BJ (cell line): ENCODE measurements at regions of chr11 and their contacts with region 1.

Region 1: DNA sequence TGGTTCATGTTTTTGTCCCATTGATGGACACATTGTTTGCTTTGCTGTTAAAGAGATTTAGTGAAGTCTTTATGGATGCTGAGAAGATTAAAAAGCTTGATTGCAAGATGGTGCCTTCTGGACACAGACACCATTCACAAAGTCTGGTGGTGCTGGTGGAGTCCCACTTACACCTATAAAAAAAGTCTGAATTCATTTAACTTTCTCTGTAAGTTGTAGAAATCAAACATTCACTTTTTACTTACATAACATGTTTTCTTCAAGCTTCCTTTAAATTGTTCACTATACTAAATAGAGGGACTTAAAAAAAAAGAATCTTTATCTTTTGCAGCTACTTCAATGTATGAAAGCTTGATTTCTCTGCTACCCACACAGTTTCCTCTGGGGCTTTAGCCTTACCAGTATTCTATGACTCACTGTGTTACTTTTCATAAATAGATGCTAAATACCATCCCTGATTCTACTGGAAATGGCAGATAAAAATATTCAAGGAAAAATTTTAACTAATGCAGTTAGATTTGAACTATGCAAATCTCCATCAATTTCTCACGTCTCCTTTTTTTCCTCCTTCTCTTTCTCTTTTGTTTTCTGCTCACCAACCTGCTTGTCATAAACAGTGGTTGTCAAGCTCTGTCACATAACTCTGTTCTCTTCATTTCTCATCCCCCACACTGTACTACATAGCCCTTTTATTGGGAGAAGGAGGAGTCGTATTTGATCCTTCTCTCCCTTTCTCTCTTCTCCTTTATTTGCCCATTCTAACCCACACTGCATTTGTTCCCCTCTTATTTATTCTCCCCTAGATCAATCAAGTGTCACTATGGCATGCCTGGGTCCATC is 89.7 kb downstream of the FAM76B start:
- DNase-seq: no peak
- H3K4me3 ChIP-seq: no peak overlapping the region
- H3K27me3 ChIP-seq: peaks cover 2% of the 10 kb centered on the region
- CTCF ChIP-seq: no peak

Region 2: DNA sequence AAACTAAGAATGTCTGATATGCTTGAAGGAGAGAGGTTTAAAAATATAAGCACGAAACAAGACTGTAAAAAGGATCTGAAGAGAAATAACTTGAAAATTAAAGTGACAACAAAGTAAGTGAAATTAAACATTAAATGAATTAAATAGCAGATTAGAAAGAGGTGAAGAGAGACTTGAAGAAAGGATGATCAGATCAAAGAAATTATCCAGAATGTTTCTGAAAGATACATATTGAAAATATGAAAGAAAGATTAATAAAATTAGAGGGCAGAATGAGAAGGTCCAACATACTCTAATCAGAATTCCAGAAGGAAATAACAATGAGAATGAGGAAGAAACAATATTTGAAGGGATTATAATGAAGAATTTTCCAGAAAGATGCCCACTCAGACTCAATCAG is 61.4 kb before region 1 on chr11:
- CTCF ChIA-PET with region 1: no interaction called
- POLR2A ChIA-PET with region 1: interaction called, 19 read pairs
- DNase-seq: no peak
- H3K4me3 ChIP-seq: no peak overlapping the region
- H3K27me3 ChIP-seq: no peaks in the 10 kb centered on the region
- CTCF ChIP-seq: no peak

Region 3: GRCh38 chr11:95821640-95822039 is 121.8 kb after region 1 on chr11:
- CTCF ChIA-PET with region 1: no interaction called
- POLR2A ChIA-PET with region 1: no interaction called
- DNase-seq: no peak
- H3K4me3 ChIP-seq: no peak overlapping the region
- H3K27me3 ChIP-seq: no peaks in the 10 kb centered on the region
- CTCF ChIP-seq: no peak